Common myeloid progenitor, CD34-positive (primary cell): ENCODE measurements at regions of chr17 and their contacts with region 1.

Region 1: DNA sequence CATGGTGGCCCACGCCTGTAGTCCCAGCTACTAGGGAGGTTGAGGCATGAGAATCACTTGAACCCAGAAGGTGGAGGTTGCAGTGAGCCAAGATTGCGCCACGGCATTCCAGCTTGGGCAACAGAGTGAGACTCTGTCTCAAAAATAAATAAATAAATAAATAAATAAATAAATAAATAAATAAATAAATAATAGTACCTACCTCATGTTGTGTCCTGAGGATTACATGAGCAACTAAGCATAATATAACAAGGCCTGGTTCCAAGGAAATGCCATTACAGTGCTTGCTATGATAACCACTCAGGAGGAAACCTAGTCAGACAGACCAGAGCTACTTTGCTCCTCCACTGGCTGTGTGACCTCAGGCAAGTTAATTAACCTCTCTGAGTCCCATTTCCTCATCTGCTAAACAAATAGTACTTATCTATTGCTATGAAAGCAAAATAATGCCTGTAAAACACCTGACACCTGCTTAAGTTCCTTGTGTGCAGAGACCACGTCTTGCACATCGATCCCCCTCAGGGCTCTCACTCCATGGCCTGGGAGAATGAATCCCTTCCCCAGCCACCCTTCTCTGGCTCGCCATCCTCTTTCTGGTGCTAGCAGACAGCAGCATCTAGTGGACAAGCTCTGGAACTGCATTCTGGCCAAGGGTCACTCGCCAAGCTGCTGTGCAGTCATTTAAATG is 7.5 kb downstream of the EPOP start:
- DNase-seq: peak; percentile 69 to 76 (median 74)
- H3K4me3 ChIP-seq: no peak overlapping the region
- H3K27ac ChIP-seq: no peak overlapping the region
- H3K4me1 ChIP-seq: peaks cover 0 to 10% (median 9%) of the 10 kb centered on the region in 4 experiments
- H3K27me3 ChIP-seq: peaks cover 8 to 46% (median 41%) of the 10 kb centered on the region in 5 experiments

Region 2: GRCh38 chr17:38632334-38632733 is 34.9 kb before region 1 on chr17:
- CTCF ChIA-PET with region 1: no interaction called
- POLR2A ChIA-PET with region 1: no interaction called
- DNase-seq: no peak
- H3K4me3 ChIP-seq: no peak overlapping the region
- H3K27ac ChIP-seq: no peak overlapping the region
- H3K4me1 ChIP-seq: no peaks in the 10 kb centered on the region
- H3K27me3 ChIP-seq: peaks cover 0 to 8% (median 2%) of the 10 kb centered on the region in 5 experiments

Region 3: DNA sequence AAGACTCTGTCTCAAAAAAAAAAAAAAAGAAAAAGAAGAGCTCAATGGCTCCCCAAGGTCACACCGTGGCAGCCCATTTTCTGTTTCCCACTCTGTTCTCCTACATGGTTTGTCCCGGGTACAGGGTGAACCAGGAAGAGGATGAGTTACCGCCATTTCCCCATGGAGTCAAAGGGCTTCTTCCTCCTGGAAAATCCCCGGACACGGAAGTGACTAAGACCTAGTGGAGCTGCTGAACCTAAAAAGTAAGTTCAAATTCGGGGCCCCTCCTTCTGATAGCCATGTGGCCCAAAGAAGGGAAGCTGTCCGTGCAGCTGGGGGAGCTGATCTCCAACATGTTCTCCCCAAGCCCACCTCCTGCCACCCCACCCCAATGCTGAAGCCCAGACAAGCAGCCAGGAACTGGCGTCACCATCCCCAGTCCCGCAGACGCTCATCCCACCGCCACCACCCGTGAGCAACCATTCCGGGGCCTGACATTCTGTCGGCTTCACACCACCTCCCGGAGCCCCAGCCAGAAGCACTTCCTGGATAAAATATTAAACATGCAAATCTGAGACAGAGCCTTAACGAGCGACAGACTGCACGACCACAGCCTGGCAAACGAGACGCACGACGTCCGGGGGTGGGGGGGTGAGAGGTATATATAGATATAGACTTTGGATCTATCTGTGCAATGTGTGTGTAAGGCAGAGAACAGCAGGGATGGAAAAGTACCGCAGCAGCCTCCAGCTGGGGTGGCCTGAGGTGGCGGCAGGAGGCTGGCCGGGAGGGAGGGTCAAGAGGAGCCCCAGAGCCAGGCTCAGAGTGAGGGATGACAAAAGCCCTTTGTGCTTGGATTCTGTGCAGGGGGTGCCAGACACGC is 10.1 kb before region 1 on chr17:
- CTCF ChIA-PET with region 1: interaction called, 61 read pairs
- POLR2A ChIA-PET with region 1: interaction called, 12 read pairs
- DNase-seq: peak in 1 of 3 donors; percentile 31
- H3K4me3 ChIP-seq: no peak overlapping the region
- H3K27ac ChIP-seq: no peak overlapping the region
- H3K4me1 ChIP-seq: peaks cover 0 to 35% (median 20%) of the 10 kb centered on the region in 4 experiments
- H3K27me3 ChIP-seq: peaks cover 0 to 15% (median 6%) of the 10 kb centered on the region in 5 experiments

Region 4: DNA sequence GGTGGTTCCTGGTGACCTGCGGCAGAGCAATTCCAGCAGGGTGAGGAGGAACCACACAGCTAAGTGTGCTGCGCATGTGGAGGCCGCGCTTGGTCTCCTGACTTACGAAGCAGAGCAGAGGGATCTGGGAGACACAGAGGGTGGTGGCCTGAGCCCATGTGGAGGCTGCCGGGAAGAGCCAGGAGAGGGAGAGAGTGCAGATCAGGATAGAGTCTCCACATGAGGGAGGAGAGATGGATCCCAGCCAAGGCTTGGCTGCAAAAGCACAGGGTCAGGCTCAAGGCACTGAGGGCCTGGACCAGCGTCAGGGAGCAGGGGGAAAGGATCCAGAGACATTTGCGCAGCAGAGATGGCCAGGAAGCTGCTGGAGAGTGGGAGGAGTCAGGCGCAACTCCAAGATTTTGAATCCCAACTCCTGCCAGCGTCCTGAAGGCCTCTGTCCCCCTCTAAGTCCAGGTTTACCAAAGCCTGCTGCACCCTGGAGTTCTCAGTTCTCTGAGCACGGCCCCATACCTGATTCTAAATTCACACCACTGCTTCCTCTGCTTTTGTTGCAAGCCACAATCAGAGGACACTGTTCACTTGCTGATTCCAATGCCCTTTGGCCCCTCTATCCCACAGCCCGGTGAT is 26.6 kb after region 1 on chr17:
- CTCF ChIA-PET with region 1: no interaction called
- POLR2A ChIA-PET with region 1: no interaction called
- DNase-seq: no peak
- H3K4me3 ChIP-seq: no peak overlapping the region
- H3K27ac ChIP-seq: no peak overlapping the region
- H3K4me1 ChIP-seq: peaks cover 0 to 19% (median 12%) of the 10 kb centered on the region in 4 experiments
- H3K27me3 ChIP-seq: no peaks in the 10 kb centered on the region

Region 5: DNA sequence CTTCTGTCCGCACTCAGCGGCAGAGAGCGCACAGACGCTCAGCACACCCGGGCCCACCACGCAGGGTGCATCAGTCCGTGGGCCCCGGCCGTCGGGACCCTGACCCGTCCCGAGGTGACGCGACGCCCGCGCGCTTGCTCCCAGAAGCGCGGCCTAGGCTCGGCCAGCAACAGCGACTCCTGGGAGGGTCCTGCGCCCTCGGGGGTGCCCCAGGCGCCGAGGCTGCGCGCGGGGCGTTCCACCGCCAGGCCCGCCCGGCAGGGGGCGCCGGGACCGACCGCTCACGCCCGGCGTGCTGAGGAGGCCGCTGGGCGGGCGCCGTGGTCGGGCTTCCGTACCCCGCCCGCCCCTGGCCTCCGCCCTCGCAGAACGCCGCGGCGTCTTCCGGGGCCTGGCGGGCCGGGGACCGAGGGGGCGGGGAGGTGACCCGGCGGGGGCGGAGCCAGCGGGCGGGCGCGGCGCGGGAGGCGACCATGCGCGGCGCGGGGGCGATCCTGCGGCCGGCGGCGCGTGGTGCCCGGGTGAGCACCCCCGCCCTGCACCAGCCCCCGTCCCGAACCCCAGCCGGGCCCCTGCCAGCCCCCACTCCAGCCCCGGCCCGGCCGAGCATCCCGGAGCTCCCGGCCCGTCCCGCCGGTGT is 62.8 kb after region 1 on chr17 and contains the start of gene CISD3:
- CTCF ChIA-PET with region 1: interaction called, 10 read pairs
- POLR2A ChIA-PET with region 1: no interaction called
- DNase-seq: peak; percentile 81 to 89 (median 88)
- H3K4me3 ChIP-seq: peak within 1 kb of the TSS; percentile 50 to 82 (median 67)
- H3K27ac ChIP-seq: peak within 1 kb of the TSS in 1 of 2 experiments; percentile 54
- H3K4me1 ChIP-seq: peaks cover 8 to 50% (median 45%) of the 10 kb centered on the region in 4 experiments
- H3K27me3 ChIP-seq: no peaks in the 10 kb centered on the region

Region 6: DNA sequence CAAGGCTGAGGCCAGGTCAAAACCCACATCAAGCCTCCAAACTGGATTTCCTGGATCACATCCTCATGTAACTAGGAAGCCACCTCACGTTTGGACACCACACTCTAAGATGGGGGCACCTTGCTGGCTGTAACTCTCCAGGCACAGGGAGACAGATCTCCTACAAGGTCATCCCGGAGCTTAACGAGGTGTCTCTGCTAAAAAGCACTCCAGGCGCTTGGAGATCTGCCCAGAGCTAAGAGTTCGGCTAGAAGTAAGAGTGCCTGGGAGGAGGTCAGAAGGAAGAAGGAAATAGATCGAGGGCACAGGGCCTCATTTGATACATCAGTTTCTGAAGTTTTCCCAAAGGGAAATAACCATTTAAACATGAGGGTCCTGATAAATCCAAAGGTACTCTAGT is 101.2 kb after region 1 on chr17:
- CTCF ChIA-PET with region 1: no interaction called
- POLR2A ChIA-PET with region 1: no interaction called
- DNase-seq: no peak
- H3K4me3 ChIP-seq: no peak overlapping the region
- H3K27ac ChIP-seq: no peak overlapping the region
- H3K4me1 ChIP-seq: no peaks in the 10 kb centered on the region
- H3K27me3 ChIP-seq: no peaks in the 10 kb centered on the region

Region 7: GRCh38 chr17:38861399-38861843 is 194.2 kb after region 1 on chr17:
- CTCF ChIA-PET with region 1: no interaction called
- POLR2A ChIA-PET with region 1: no interaction called
- DNase-seq: peak in 2 of 3 donors; percentile 78 to 84
- H3K4me3 ChIP-seq: no peak overlapping the region
- H3K27ac ChIP-seq: no peak overlapping the region
- H3K4me1 ChIP-seq: no peaks in the 10 kb centered on the region
- H3K27me3 ChIP-seq: no peaks in the 10 kb centered on the region